K562 (cell line): ENCODE measurements at regions of chr9 and their contacts with region 1.

Region 1: GRCh38 chr9:136631038-136632000 is 31.4 kb upstream of the EGFL7 start:
- DNase-seq: peak; percentile 71 to 86 (median 74)
- ATAC-seq: peak; percentile 96
- H3K4me3 ChIP-seq: no peak overlapping the region
- H3K27ac ChIP-seq: no peak overlapping the region
- H3K4me1 ChIP-seq: peaks cover 0 to 51% of the 10 kb centered on the region in 2 experiments; a peak in 4 of 5 replicates
- H3K27me3 ChIP-seq: peaks cover 0 to 7% of the 10 kb centered on the region in 2 experiments; a peak in 3 of 5 replicates
- CTCF ChIP-seq: peak; percentile 89 to 91 (median 89)
- EP300 ChIP-seq: no peak
- POLR2A ChIP-seq: no peak
- RAD21 ChIP-seq: peak; percentile 91 to 93

Region 2: GRCh38 chr9:136339173-136339957 is 292.0 kb before region 1 on chr9:
- CTCF ChIA-PET with region 1: interaction called, 3 read pairs
- POLR2A ChIA-PET with region 1: no interaction called
- in situ Hi-C with region 1: loop called (anchors 25 kb)
- intact Hi-C with region 1: no loop called
- DNase-seq: peak; percentile 71 to 84 (median 75)
- ATAC-seq: peak; percentile 87
- H3K4me3 ChIP-seq: no peak overlapping the region
- H3K27ac ChIP-seq: no peak overlapping the region
- H3K4me1 ChIP-seq: peaks cover 7 to 96% of the 10 kb centered on the region in 2 experiments
- H3K27me3 ChIP-seq: no peaks in the 10 kb centered on the region
- CTCF ChIP-seq: peak; percentile 94 to 97 (median 95)
- EP300 ChIP-seq: no peak
- POLR2A ChIP-seq: no peak
- RAD21 ChIP-seq: peak; percentile 80 to 82

Region 3: DNA sequence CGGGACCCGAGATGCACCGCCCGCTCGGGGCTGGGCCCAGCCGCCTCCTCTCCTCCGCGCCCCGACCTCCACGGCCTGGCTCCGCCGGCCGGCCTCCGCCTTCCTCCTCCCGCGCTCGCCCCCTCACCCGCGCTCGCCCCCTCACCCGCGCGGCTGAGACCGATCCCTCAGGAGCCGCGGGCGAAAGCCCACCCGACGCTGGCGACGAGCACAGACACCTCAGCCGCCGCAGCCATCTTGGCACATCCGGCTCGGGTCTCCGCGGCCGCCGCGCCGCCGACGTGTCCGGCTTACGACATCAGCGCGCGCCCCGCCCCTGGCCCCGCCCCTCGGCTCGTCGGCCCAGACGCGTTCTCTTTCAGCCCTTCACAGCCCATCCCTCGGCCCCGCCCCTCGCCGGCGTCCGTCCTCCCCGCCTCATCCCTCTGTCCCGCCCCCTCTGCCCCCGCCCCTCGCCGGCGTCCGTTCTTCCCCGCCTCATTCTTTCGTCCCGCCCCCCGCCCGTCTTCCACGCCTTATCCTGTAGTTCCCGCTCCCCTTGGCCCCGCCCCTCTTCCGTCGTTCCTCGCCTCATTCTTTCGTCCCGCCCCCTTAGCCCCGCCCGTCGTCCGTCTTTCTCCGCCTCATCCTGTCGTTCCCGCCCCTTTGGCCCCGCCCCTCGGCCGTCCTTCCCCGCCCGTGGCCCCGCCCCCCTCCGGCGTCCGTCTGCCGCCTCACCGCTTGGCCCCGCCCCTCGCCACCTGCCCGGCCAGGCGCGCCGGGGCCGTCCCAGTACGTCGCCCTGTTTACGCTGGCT is 148.3 kb before region 1 on chr9 and contains the start of gene SEC16A:
- CTCF ChIA-PET with region 1: interaction called, 154 read pairs
- POLR2A ChIA-PET with region 1: interaction called, 9 read pairs
- in situ Hi-C with region 1: no loop called
- intact Hi-C with region 1: loop called (anchors 1 kb)
- DNase-seq: peak; percentile 89 to 98 (median 93)
- ATAC-seq: peak; percentile 83
- H3K4me3 ChIP-seq: peak within 1 kb of the TSS; percentile 97
- H3K27ac ChIP-seq: peak within 1 kb of the TSS; percentile 100
- H3K4me1 ChIP-seq: peaks cover 17 to 38% of the 10 kb centered on the region in 2 experiments
- H3K27me3 ChIP-seq: peaks cover 0 to 15% of the 10 kb centered on the region in 2 experiments; a peak in 2 of 5 replicates
- CTCF ChIP-seq: no peak
- EP300 ChIP-seq: no peak
- POLR2A ChIP-seq: peak; percentile 83
- RAD21 ChIP-seq: no peak
- polyA plus RNA-seq, gene SEC16A: 8.3 to 12.0 TPM

Region 4: DNA sequence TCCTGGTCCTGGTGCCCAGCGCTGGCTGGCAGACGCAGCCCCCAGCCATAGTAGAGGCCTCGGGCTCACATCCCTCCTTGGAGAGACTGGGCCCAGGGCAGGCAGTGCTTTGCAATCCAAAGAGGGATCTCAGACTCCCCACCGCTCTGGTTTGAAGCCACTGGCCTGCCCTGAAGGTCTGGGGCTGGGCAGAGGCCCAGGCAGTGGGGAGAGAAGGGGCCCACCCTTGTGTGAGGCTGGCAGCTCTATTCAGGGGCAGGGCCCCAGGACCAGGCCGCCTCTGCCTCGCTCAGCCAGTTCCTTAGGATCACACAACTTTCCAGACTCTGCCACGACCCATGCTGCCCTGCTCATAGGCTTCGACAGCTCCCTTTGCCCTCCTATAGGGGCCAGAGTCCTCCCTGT is 137.8 kb before region 1 on chr9:
- CTCF ChIA-PET with region 1: interaction called, 154 read pairs
- POLR2A ChIA-PET with region 1: interaction called, 3 read pairs
- in situ Hi-C with region 1: loop called (anchors 5 kb)
- intact Hi-C with region 1: no loop called
- DNase-seq: no peak
- ATAC-seq: peak; percentile 17; the same call in 1 of the 3 replicates
- H3K4me3 ChIP-seq: no peak overlapping the region
- H3K27ac ChIP-seq: no peak overlapping the region
- H3K4me1 ChIP-seq: peaks cover 0 to 33% of the 10 kb centered on the region in 2 experiments; a peak in 2 of 5 replicates
- H3K27me3 ChIP-seq: peaks cover 0 to 15% of the 10 kb centered on the region in 2 experiments; a peak in 2 of 5 replicates
- CTCF ChIP-seq: no peak
- EP300 ChIP-seq: no peak
- POLR2A ChIP-seq: no peak; the same call in 1 of the 2 replicates
- RAD21 ChIP-seq: no peak

Region 5: GRCh38 chr9:136545966-136546698 is 85.2 kb before region 1 on chr9 and contains the start of gene NOTCH1:
- CTCF ChIA-PET with region 1: no interaction called
- POLR2A ChIA-PET with region 1: no interaction called
- in situ Hi-C with region 1: no loop called
- intact Hi-C with region 1: loop called (anchors 10 kb)
- DNase-seq: peak; percentile 87 to 96 (median 94)
- ATAC-seq: peak; percentile 90
- H3K4me3 ChIP-seq: peak within 1 kb of the TSS; percentile 69
- H3K27ac ChIP-seq: peak within 1 kb of the TSS; percentile 70
- H3K4me1 ChIP-seq: peaks cover 15 to 85% of the 10 kb centered on the region in 2 experiments; a peak in 4 of 5 replicates
- H3K27me3 ChIP-seq: no peaks in the 10 kb centered on the region
- CTCF ChIP-seq: no peak
- EP300 ChIP-seq: no peak
- POLR2A ChIP-seq: peak; percentile 44; the same call in 1 of the 2 replicates
- RAD21 ChIP-seq: peak; percentile 0 to 17; a peak in 1 of 4 replicates
- polyA plus RNA-seq, gene NOTCH1: 0.03 to 0.04 TPM

Region 6: DNA sequence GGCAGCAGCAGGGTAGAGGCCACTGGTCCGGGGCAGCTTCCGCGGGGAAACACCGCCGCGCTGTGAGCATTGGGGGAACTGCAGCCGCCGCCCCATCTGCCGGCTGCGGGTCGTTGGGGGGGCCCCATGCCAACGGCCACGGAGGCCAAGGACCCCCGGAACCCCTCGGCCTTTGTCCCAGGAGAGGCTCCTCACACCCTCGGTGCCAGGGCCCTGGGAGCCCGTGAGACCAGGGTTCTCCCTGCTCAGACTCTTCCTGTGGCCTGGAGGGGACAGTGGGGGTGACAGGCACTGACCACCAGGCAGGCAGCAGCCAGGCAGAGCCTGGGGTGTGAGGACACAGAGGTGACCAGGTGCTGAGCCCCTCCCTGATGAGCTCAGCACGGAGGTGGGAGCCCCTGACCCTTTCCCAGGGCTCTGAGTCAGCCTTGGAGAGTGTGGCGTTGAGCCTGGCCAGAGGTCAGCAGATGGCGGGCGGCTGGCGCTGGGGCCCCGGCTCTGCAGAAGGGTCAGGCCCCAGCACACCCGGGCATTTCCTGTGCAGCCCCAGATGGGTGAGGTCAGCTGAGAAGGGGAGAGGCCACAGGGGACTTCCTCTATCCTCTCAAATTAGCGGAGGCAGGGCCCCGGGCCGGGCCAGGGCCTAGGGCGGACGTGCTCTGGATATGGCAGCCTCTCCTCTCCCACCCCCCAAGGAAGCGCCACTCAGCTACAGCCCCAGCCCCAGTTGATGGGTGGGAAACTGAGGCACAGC is 13.5 kb after region 1 on chr9:
- CTCF ChIA-PET with region 1: interaction called, 4 read pairs
- POLR2A ChIA-PET with region 1: interaction called, 3 read pairs
- in situ Hi-C with region 1: no loop called
- intact Hi-C with region 1: loop called (anchors 2 kb)
- DNase-seq: peak; percentile 60 to 88 (median 72)
- ATAC-seq: peak; percentile 75
- H3K4me3 ChIP-seq: peak overlapping the region; percentile 41
- H3K27ac ChIP-seq: peak overlapping the region; percentile 83
- H3K4me1 ChIP-seq: peaks cover 39 to 62% of the 10 kb centered on the region in 2 experiments
- H3K27me3 ChIP-seq: no peaks in the 10 kb centered on the region
- CTCF ChIP-seq: peak; percentile 88 to 91 (median 90)
- EP300 ChIP-seq: peak; percentile 15; the same call in 1 of the 2 replicates
- POLR2A ChIP-seq: no peak
- RAD21 ChIP-seq: peak; percentile 63 to 81

Region 7: DNA sequence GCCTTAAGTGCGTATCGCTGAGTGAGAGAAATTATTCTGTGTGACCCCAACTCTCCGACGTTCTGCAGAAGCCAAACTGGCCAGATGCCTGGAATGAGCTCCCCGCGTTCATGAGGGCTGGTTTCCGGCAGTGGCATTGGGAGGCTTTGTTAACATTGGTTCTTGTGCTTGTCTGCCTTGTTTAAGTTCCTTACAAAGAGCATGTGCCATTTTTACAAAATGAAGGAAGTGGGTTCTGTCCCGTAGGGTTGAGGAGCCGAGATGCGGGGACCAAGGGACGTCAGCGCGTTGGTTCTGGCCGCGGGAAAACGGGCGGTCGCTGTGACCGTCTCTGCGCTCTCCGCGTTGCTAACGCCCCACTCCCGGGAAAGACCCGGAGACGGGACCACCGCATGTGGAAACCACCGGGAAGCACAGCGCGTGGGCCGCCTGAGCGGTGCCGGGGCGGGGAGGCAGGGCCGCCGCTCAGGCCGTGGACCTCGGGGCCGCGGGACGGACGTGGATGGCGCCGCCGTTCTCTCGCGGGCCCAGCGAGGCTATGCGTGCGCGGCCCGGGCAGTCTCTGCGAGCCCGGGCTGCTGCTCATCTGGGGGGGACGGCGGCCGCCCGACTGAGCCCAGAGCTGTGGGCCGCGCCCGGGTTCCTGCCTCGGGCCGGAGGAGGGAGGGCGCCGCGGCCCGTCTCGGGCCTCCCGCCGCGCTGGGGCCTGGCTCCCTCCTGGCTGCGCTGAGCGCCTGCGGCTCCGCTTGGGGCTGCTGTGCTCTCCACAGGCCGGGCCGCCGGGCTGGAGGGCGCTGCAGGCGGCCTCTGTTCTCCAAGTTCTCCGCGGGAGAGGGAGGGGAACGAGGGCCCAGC is 189.9 kb after region 1 on chr9:
- CTCF ChIA-PET with region 1: no interaction called
- POLR2A ChIA-PET with region 1: no interaction called
- in situ Hi-C with region 1: no loop called
- intact Hi-C with region 1: no loop called
- DNase-seq: peak in 2 of 4 experiments; percentile 53 to 56
- ATAC-seq: no peak
- H3K4me3 ChIP-seq: no peak overlapping the region
- H3K27ac ChIP-seq: no peak overlapping the region
- H3K4me1 ChIP-seq: peaks cover 0 to 25% of the 10 kb centered on the region in 2 experiments; a peak in 2 of 5 replicates
- H3K27me3 ChIP-seq: no peaks in the 10 kb centered on the region
- CTCF ChIP-seq: no peak
- EP300 ChIP-seq: no peak
- POLR2A ChIP-seq: no peak
- RAD21 ChIP-seq: no peak